Heart right ventricle (tissue), 16 donors: ENCODE measurements at regions of chr6 and their contacts with region 1.

Region 1: DNA sequence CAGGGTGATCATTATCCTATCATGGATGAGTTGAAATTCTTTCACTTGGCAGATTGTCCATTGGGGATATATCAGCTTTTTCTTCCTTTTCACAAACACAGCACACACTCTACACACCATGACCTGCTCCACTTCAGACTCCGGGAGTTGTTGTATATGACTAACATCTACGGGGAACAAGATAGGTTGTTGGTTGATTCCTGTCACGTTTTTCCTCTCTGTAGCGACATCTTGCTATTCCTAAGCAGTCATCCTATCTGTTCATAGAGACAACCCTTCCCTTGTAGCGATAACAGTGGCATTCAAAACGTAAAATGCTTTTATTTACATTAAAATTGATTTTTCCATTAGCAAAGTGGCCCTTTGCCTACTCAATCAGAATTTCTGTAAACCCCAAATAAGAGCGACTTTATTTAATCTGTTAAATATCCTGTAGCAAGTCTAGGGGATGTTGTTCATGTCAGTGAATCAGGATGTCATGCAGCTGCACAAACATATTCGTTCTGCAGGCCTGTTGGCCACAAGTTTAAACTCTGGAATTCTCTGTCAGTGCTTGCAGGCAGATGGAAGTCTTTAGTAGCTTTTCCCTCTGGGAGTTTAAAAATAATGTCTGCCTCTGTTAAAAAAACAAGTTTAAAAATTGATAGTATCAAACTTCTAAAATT is 23.1 kb downstream of the PHACTR2 start:
- DNase-seq: peak in 1 of 2 donors; percentile 56
- ATAC-seq: peak; percentile 47 to 92 (median 85)
- H3K4me3 ChIP-seq: peak overlapping the region in 4 of 10 donors; percentile 1 to 23 (median 10)
- H3K27ac ChIP-seq: peak overlapping the region; percentile 41 to 77 (median 66)
- H3K4me1 ChIP-seq: peaks cover 0 to 83% (median 58%) of the 10 kb centered on the region in 9 donors
- H3K27me3 ChIP-seq: no peaks in the 10 kb centered on the region
- CTCF ChIP-seq: no peak

Region 2: GRCh38 chr6:143718472-143718871 is 17.7 kb after region 1 on chr6:
- intact Hi-C with region 1: no loop called
- DNase-seq: no peak
- ATAC-seq: peak in 1 of 8 donors; percentile 27
- H3K4me3 ChIP-seq: no peak overlapping the region
- H3K27ac ChIP-seq: peak overlapping the region in 3 of 10 donors; percentile 10 to 37 (median 21)
- H3K4me1 ChIP-seq: peaks cover 0 to 21% (median 5%) of the 10 kb centered on the region in 9 donors
- H3K27me3 ChIP-seq: no peaks in the 10 kb centered on the region
- CTCF ChIP-seq: no peak

Region 3: GRCh38 chr6:143745166-143746133 is 44.6 kb after region 1 on chr6:
- intact Hi-C with region 1: loop called in 2 of 10 experiments (anchors 5 to 10 kb)
- DNase-seq: peak in 1 of 2 donors; percentile 52
- ATAC-seq: peak; percentile 26 to 77 (median 61)
- H3K4me3 ChIP-seq: peak overlapping the region in 6 of 10 donors; percentile 2 to 19 (median 14)
- H3K27ac ChIP-seq: peak overlapping the region; percentile 31 to 85 (median 68)
- H3K4me1 ChIP-seq: peaks cover 21 to 91% (median 69%) of the 10 kb centered on the region in 9 donors
- H3K27me3 ChIP-seq: no peaks in the 10 kb centered on the region
- CTCF ChIP-seq: no peak

Region 4: GRCh38 chr6:143782481-143782880 is 81.7 kb after region 1 on chr6:
- intact Hi-C with region 1: no loop called
- DNase-seq: no peak
- ATAC-seq: peak in 1 of 8 donors; percentile 33
- H3K4me3 ChIP-seq: no peak overlapping the region
- H3K27ac ChIP-seq: peak overlapping the region in 2 of 10 donors; percentile 7 to 28
- H3K4me1 ChIP-seq: peaks cover 0 to 16% (median 6%) of the 10 kb centered on the region in 9 donors
- H3K27me3 ChIP-seq: no peaks in the 10 kb centered on the region
- CTCF ChIP-seq: no peak